Astrocyte of the cerebellum (primary cell): ENCODE measurements at regions of chr2 and their contacts with region 1.

Region 1: DNA sequence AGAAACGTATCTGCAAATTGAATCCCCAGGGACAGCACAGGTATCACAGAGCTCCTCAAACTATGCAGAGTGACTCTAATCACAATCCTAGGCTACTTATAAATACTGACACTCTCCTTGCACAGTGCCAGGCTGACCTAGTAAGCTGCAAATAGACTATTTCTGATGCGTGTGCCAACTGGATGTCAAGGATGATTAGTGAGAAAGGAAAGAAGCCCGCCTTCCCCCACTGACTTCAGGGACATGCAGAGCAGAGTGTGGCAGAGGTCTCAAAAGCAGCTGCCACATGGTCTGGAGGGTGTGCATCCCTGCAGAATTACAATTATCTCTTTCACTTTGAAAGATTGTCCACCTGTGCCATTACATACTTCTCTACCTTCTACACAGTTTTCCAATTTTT is 235.6 kb downstream of the CPS1 start:
- DNase-seq: no peak
- H3K4me3 ChIP-seq: no peak overlapping the region
- CTCF ChIP-seq: no peak

Region 2: GRCh38 chr2:210862192-210863090 is 70.4 kb after region 1 on chr2:
- in situ Hi-C with region 1: loop called (anchors 5 kb)
- DNase-seq: no peak
- H3K4me3 ChIP-seq: no peak overlapping the region
- CTCF ChIP-seq: no peak